ENCODE measurements at regions of chr15 and their contacts with region 1.

Region 1: GRCh38 chr15:73305331-73306211 is 63.2 kb downstream of the HCN4 start:
- DNase-seq: peak in 2 of 10 donors; percentile 58 to 68
- H3K4me3 ChIP-seq: no peak overlapping the region
- H3K27ac ChIP-seq: peak overlapping the region in 7 of 59 donors; percentile 7 to 53 (median 23)
- H3K27me3 ChIP-seq: no peaks in the 10 kb centered on the region
- CTCF ChIP-seq: peak in 54 of 56 donors; percentile 19 to 67 (median 50)

Region 2: DNA sequence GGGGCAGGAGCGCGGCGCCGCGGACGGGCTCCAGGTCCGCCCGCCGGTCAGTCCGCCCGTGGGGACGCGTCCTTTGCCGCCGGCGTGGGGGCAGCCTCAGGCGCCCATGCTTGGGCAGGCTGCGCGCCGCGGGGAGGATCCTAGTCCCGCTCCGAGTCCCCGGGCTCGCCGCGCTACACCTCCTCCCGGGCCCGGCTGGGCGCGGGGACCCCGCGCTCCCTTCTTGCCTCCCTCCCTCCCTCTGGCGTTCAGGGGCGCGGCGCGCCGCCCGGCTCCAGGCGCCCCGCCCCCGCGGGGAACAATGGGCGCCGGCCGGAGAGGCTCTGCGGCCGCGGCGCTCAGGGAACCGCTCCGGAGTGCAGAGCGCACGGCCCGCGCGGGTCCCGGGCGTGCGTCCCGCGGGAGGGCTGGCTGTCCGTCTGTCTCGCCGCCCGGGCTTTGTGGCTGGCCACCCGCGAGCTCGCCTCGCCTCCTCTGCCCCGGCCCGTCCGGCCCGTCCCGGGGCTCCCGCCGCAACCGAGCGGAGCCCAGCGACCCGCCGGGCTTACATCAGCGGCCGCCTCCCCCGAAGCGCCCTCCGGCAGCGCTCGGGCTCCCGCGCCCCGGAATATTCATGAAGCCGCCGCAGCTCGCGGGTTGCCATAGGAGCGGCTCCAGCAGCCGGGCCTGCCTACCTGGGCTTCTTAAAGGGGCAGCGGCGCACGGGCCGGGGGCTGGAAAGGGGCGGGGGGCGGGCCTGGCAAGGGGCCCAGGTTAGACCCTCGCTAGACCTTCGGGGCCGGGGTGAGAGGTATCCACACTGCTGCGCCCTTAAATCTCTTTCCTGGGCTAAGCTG is 62.9 kb after region 1 on chr15 and contains the start of gene HCN4:
- intact Hi-C with region 1: no loop called
- DNase-seq: peak in 6 of 10 donors; percentile 9 to 62 (median 38)
- H3K4me3 ChIP-seq: peak within 1 kb of the TSS; percentile 13 to 67 (median 46)
- H3K27ac ChIP-seq: no peak within 1 kb of the TSS
- H3K27me3 ChIP-seq: peaks cover 0 to 72% (median 39%) of the 10 kb centered on the region in 45 donors
- CTCF ChIP-seq: no peak
- total RNA-seq, gene HCN4: 0.42 to 5.9 (median 2.5) TPM

Region 3: GRCh38 chr15:73704869-73705645 is 399.5 kb after region 1 on chr15:
- intact Hi-C with region 1: loop called (anchors 5 to 10 kb)
- DNase-seq: peak in 8 of 10 donors; percentile 33 to 70 (median 63)
- H3K4me3 ChIP-seq: no peak overlapping the region
- H3K27ac ChIP-seq: no peak overlapping the region
- H3K27me3 ChIP-seq: no peaks in the 10 kb centered on the region
- CTCF ChIP-seq: peak; percentile 43 to 81 (median 72)

Measured in dorsolateral prefrontal cortex (tissue), 120 donors.